ENCODE measurements at regions of chr5 and their contacts with region 1.

Region 1: DNA sequence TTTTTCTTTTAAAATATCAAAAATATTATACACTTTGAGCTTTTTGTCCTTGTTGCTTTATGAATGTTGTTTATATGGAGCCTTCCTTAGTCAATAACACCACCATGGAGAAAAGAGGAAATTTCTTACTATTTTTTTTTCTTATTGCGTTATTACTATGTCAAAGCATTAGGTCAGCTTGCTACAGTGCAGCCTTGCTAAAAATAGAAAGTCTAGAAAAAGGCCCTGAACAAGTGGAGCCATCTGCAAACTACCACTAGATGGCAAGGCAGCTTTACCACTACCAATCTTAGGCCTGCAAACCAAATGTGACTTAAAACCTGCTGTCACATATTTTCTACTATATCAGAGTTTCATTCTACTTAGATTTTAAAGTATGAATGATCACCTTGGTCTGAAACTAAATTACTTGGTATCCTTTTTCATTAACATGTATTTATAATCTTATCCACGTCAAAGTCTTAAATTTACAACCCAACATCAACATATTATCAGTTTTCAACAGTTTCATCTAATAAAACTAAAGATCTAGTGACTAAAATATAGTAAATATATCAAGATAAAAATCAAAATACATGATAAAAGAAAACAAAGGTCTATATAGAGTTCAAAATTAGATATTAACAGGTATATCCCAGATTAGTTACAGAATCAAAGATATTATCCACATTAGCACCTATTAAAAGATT is 113.1 kb upstream of the ACOT12 start:
- DNase-seq: peak; percentile 77 to 89 (median 87)
- H3K4me3 ChIP-seq: no peak overlapping the region
- H3K4me3 Mint-ChIP-seq: no peak overlapping the region
- H3K27ac ChIP-seq: no peak overlapping the region
- H3K27ac Mint-ChIP-seq: no peak overlapping the region
- H3K4me1 ChIP-seq: peaks cover 3 to 9% of the 10 kb centered on the region in 2 donors
- H3K4me1 Mint-ChIP-seq: peaks cover 10% of the 10 kb centered on the region
- H3K27me3 ChIP-seq: no peaks in the 10 kb centered on the region
- H3K27me3 Mint-ChIP-seq: no peaks in the 10 kb centered on the region
- CTCF ChIP-seq: peak; percentile 79

Region 2: GRCh38 chr5:81495286-81495685 is 11.8 kb before region 1 on chr5:
- intact Hi-C with region 1: no loop called
- DNase-seq: no peak
- H3K4me3 ChIP-seq: no peak overlapping the region
- H3K4me3 Mint-ChIP-seq: no peak overlapping the region
- H3K27ac ChIP-seq: no peak overlapping the region
- H3K27ac Mint-ChIP-seq: no peak overlapping the region
- H3K4me1 ChIP-seq: no peaks in the 10 kb centered on the region
- H3K4me1 Mint-ChIP-seq: no peaks in the 10 kb centered on the region
- H3K27me3 ChIP-seq: no peaks in the 10 kb centered on the region
- H3K27me3 Mint-ChIP-seq: peaks cover 0 to 2% (median 2%) of the 10 kb centered on the region in 3 donors
- CTCF ChIP-seq: no peak

Region 3: DNA sequence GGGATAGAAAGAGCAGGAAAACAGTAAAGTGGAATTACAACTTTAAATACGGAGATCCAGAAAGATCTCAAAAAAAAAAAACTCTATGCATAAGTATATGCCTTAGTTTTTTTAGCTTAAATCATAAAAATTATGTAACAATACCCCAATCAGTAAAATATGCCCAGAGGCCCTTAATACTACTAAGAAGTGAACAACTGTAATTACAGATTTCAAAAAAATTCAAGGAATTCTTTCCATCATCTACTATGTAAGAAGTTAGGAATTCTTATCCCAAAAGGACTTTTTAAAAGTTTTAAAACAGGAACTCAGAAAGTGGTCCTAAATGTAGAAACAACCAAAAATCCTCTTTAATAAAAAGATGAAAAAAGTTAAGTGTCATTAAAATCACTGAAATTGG is 132.5 kb after region 1 on chr5:
- intact Hi-C with region 1: no loop called
- DNase-seq: no peak
- H3K4me3 ChIP-seq: no peak overlapping the region
- H3K4me3 Mint-ChIP-seq: no peak overlapping the region
- H3K27ac ChIP-seq: no peak overlapping the region
- H3K27ac Mint-ChIP-seq: no peak overlapping the region
- H3K4me1 ChIP-seq: no peaks in the 10 kb centered on the region
- H3K4me1 Mint-ChIP-seq: no peaks in the 10 kb centered on the region
- H3K27me3 ChIP-seq: no peaks in the 10 kb centered on the region
- H3K27me3 Mint-ChIP-seq: no peaks in the 10 kb centered on the region
- CTCF ChIP-seq: no peak

Region 4: GRCh38 chr5:81751009-81751835 is 244.2 kb after region 1 on chr5 and contains the start of gene SSBP2:
- intact Hi-C with region 1: loop called in 1 of 2 experiments (anchors 2 kb)
- DNase-seq: peak; percentile 95 to 100 (median 99)
- H3K4me3 ChIP-seq: peak within 1 kb of the TSS; percentile 83 to 88 (median 85)
- H3K4me3 Mint-ChIP-seq: peak within 1 kb of the TSS; percentile 95 to 99
- H3K27ac ChIP-seq: peak within 1 kb of the TSS; percentile 86 to 88
- H3K27ac Mint-ChIP-seq: peak within 1 kb of the TSS; percentile 84 to 94 (median 92)
- H3K4me1 ChIP-seq: peaks cover 12 to 18% of the 10 kb centered on the region in 2 donors
- H3K4me1 Mint-ChIP-seq: peaks cover 28% of the 10 kb centered on the region
- H3K27me3 ChIP-seq: peaks cover 4 to 5% of the 10 kb centered on the region in 2 donors
- H3K27me3 Mint-ChIP-seq: peaks cover 2 to 13% (median 5%) of the 10 kb centered on the region in 3 donors
- CTCF ChIP-seq: no peak
- polyA plus RNA-seq, gene SSBP2: 29.1 to 55.2 (median 53.4) TPM

Region 5: DNA sequence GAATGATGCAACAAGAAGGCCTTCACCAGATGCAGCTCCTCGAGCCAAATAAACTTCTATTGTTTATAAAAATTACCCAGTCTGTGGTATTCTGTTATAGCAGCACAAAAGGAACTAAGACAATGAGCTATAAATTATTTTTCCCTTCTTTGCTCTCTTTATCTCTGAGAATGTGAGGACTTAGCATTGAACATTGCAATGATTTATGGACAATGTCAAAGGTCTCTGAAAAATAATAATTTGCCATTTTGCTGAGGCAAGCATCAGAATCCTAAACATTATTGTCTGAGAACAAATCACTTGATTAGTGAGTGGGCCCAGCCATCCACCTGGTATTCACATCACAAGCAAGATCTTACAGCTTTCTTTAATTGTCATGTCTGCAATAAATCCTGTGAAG is 339.3 kb after region 1 on chr5:
- intact Hi-C with region 1: loop called (anchors 2 to 10 kb)
- DNase-seq: no peak
- H3K4me3 ChIP-seq: no peak overlapping the region
- H3K4me3 Mint-ChIP-seq: no peak overlapping the region
- H3K27ac ChIP-seq: no peak overlapping the region
- H3K27ac Mint-ChIP-seq: no peak overlapping the region
- H3K4me1 ChIP-seq: peaks cover 25 to 30% of the 10 kb centered on the region in 2 donors
- H3K4me1 Mint-ChIP-seq: peaks cover 34% of the 10 kb centered on the region
- H3K27me3 ChIP-seq: no peaks in the 10 kb centered on the region
- H3K27me3 Mint-ChIP-seq: peaks cover 0 to 2% (median 0%) of the 10 kb centered on the region in 3 donors
- CTCF ChIP-seq: no peak

Region 6: DNA sequence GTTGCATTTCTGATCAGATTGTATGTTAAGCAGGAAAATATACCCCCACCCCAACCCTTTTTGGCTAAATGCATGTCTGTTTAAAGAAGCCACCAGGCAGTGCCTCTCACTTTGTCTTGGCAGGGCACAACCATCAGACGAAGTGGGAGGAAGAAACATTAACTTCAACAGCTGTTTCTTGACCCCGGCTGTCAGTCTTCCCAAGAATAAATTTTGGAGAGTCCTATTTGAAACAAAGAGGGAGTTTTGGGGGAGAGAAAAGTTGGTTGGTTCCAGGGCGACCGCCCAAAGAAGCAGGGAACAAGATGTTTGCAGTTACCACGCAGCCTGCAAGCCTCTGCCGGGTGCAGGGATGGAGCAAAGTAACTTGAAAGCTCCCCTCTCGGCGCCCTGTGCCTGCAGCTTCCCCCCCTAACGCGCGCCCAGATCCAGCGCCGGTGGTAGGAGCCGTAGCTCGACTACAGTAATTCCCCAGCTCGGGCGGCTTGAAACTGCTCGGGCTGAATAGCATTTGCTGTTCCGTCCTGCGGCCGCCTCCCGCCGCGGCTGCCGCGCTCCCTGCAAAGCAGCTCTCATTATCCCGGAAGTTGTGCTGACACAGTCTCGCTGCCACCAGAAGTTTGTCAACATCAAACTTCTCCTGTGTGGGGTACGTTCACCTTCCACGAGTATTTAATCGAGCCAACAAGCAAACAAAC is 344.6 kb after region 1 on chr5:
- intact Hi-C with region 1: loop called (anchors 2 to 10 kb)
- DNase-seq: peak; percentile 86 to 92 (median 87)
- H3K4me3 ChIP-seq: peak overlapping the region; percentile 57 to 80 (median 57)
- H3K4me3 Mint-ChIP-seq: peak overlapping the region; percentile 87 to 95
- H3K27ac ChIP-seq: peak overlapping the region; percentile 80 to 87
- H3K27ac Mint-ChIP-seq: peak overlapping the region; percentile 86 to 98 (median 94)
- H3K4me1 ChIP-seq: peaks cover 34 to 42% of the 10 kb centered on the region in 2 donors
- H3K4me1 Mint-ChIP-seq: peaks cover 46% of the 10 kb centered on the region
- H3K27me3 ChIP-seq: no peaks in the 10 kb centered on the region
- H3K27me3 Mint-ChIP-seq: peaks cover 0 to 2% (median 0%) of the 10 kb centered on the region in 3 donors
- CTCF ChIP-seq: no peak

Region 7: DNA sequence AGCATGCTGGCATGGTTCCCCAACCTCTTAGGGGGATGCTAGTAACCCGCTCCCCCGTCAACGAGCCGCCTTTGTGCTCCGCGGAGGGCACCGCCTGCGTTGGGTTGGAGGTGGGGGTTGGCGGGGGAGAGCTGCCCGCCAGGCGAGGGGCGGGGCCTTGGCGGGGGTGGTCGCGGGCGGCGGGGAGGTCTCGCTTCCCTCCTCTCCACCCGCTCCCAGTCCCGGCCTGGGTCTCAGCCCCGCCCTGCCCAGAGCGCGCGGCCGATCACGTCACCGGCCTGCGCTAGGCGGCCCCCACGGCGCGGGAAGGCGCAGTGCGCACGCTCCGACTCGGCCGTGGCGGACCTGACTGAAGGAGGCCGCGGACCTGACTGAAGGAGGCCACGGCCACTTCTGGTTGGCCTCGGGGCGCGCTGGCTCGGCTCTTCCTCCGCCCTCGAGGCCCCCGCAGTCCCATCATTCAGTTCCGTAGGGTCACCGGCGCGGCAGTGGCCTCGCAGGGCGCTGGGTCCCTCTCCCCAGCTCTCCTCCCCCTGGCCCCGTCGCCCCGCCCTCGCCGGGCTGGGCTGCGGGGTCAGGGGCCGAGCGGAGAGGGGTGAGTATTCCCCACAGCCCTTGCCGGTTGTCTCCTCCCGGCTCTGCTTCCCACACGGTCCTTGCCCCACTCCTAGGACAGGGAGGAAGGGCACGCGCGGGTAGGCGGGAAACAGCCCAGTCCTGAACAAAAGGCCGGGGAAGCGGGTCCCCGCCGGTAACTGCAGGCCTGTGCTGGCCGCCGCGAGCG is 464.9 kb after region 1 on chr5 and contains the start of gene ATG10:
- intact Hi-C with region 1: loop called in 1 of 2 experiments (anchors 10 kb)
- DNase-seq: peak; percentile 84 to 87 (median 85)
- H3K4me3 ChIP-seq: peak within 1 kb of the TSS; percentile 81 to 99 (median 91)
- H3K4me3 Mint-ChIP-seq: peak within 1 kb of the TSS; percentile 87 to 94
- H3K27ac ChIP-seq: peak within 1 kb of the TSS; percentile 82 to 94
- H3K27ac Mint-ChIP-seq: peak within 1 kb of the TSS; percentile 92 to 97 (median 95)
- H3K4me1 ChIP-seq: peaks cover 8 to 16% of the 10 kb centered on the region in 2 donors
- H3K4me1 Mint-ChIP-seq: peaks cover 26% of the 10 kb centered on the region
- H3K27me3 ChIP-seq: no peaks in the 10 kb centered on the region
- H3K27me3 Mint-ChIP-seq: peaks cover 0 to 3% (median 2%) of the 10 kb centered on the region in 3 donors
- CTCF ChIP-seq: no peak
- polyA plus RNA-seq, gene ATG10: 2.1 to 7.9 (median 5.6) TPM

Region 8: GRCh38 chr5:81980598-81981260 is 473.7 kb after region 1 on chr5:
- intact Hi-C with region 1: loop called (anchors 10 kb)
- DNase-seq: no peak
- H3K4me3 ChIP-seq: no peak overlapping the region
- H3K4me3 Mint-ChIP-seq: no peak overlapping the region
- H3K27ac ChIP-seq: peak overlapping the region in 1 of 2 donors; percentile 7
- H3K27ac Mint-ChIP-seq: peak overlapping the region in 2 of 7 donors; percentile 28 to 79
- H3K4me1 ChIP-seq: peaks cover 4 to 15% of the 10 kb centered on the region in 2 donors
- H3K4me1 Mint-ChIP-seq: peaks cover 15% of the 10 kb centered on the region
- H3K27me3 ChIP-seq: no peaks in the 10 kb centered on the region
- H3K27me3 Mint-ChIP-seq: peaks cover 0 to 2% (median 0%) of the 10 kb centered on the region in 3 donors
- CTCF ChIP-seq: no peak